ENCODE measurements at regions of chr5 and their contacts with region 1.

Region 1: GRCh38 chr5:88140856-88141752 is 127.5 kb downstream of the TMEM161B start:
- DNase-seq: peak; percentile 93 to 96 (median 94)
- ATAC-seq: peak; percentile 97 to 99 (median 99)
- H3K4me3 ChIP-seq: peak overlapping the region; percentile 31 to 65 (median 54)
- H3K27ac ChIP-seq: peak overlapping the region in 5 of 12 donors; percentile 6 to 62 (median 31)
- H3K4me1 ChIP-seq: peaks cover 0 to 47% (median 24%) of the 10 kb centered on the region in 12 donors
- H3K27me3 ChIP-seq: peaks cover 9 to 77% (median 47%) of the 10 kb centered on the region in 9 donors
- CTCF ChIP-seq: peak; percentile 44 to 90 (median 78)
- POLR2A ChIP-seq: peak in 1 of 2 donors; percentile 54

Region 2: DNA sequence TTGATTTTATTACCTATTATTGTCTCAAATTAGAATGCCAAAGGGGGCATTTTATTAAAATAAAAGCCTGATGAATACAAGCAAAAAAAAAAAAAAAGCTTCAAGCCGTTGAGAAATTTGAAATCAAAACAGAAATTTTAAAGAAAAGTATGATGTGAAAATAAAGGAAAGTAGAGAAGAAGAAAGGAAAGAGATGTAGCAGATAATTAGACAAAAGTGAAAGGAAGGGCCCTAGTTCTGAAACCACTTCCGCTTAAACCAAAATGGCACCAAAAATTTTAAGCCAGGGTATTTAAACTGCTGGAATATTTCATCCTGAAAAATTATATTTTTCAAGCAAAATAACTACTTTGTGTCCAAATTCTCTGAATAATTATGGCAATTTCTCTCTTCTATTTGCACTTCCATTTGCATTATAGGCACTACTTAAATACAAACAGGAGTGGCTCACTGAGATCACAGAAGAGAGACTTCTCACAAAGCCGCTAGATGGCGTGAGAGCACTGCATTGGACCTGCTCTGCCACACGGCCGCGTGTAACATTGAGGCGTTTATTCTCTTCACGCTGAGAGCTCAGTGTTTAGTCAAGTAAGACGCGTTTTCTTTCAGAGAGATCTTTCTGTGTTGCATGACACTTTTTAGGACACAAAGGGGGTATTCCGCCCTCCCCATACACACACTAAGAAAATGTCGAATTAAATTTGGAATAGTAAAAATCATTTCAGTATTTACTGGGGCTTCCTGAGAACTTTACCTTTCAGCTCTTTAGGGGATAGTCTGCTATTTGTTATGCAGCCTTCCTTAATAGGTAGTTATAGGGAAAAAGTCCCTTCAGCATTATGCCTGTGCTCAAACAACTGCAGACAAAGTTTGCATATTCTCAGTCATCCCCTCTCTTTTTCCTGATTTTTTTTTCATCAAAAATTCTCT is 360.0 kb before region 1 on chr5:
- intact Hi-C with region 1: loop called (anchors 5 to 10 kb)
- DNase-seq: peak; percentile 76 to 80 (median 76)
- ATAC-seq: peak; percentile 91 to 98 (median 96)
- H3K4me3 ChIP-seq: no peak overlapping the region
- H3K27ac ChIP-seq: no peak overlapping the region
- H3K4me1 ChIP-seq: no peaks in the 10 kb centered on the region
- H3K27me3 ChIP-seq: peaks cover 0 to 78% (median 36%) of the 10 kb centered on the region in 9 donors
- CTCF ChIP-seq: peak; percentile 83 to 97 (median 92)
- POLR2A ChIP-seq: no peak

Region 3: DNA sequence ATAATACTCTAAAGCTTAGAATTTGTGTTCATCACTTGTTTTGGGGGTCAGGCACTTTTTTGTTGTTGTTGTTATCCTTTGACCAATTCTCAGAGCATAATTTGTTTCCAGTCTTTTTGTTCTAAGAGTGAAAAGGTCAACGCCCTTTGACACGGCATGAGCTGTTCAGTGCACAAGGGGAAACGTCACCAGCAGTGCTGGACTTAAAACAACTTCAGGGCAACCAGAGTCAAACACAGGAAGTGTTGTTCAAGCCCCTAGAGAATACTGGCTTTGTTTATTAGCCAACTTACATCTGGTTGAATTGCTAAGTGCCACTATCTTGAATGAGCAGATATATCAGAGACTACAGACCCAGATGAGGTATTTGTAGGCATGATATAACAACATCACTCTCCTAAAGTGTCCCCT is 241.4 kb before region 1 on chr5:
- intact Hi-C with region 1: loop called in 1 of 10 experiments (anchors 5 kb)
- DNase-seq: peak in 4 of 5 donors; percentile 49 to 67 (median 60)
- ATAC-seq: peak; percentile 88 to 96 (median 94)
- H3K4me3 ChIP-seq: no peak overlapping the region
- H3K27ac ChIP-seq: peak overlapping the region in 10 of 12 donors; percentile 5 to 64 (median 44)
- H3K4me1 ChIP-seq: peaks cover 0 to 9% (median 3%) of the 10 kb centered on the region in 12 donors
- H3K27me3 ChIP-seq: no peaks in the 10 kb centered on the region
- CTCF ChIP-seq: no peak
- POLR2A ChIP-seq: no peak

Region 4: DNA sequence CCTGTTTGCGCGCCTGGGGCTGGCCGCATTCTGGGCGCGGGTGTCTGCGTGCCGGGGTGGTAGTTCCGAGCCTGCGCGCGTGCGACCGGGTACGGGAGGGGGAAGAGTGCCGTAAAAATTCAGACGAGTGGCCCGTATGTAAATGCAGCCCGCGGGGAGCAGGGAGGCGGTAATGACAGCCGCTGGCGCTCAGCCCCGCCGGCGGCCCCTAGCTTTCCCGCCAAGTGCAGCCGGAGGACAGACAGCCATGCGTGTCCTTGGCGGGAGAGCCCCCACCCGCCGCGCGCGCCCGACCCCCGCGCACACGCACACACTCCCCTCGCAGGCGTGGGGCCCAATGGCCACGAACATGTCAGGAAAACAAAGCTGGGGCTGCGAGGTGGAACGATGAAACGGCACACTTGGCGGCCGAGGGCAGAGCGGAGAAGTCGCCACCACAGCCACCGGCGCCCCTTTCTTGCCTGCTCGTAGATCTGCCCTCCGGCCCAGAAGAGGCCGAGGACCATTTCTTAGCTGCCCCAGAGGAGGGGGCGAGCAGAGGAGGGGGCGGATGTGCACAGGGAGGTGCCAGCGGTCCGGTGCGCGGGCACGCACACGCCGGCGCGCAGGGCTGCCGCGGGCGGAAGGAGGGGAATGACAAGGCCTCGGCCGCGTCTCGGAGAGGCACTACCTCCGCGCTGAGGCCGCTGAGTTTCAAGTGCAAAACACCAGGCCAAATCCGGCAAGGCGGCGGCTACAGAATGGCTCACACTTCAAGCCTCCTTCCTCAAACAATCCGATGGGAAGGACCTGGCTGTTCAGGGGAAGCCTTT is 533.5 kb after region 1 on chr5:
- intact Hi-C with region 1: loop called in 4 of 10 experiments (anchors 2 to 5 kb)
- DNase-seq: peak in 1 of 5 donors; percentile 55
- ATAC-seq: peak in 3 of 4 donors; percentile 11 to 57 (median 50)
- H3K4me3 ChIP-seq: peak overlapping the region; percentile 15 to 57 (median 42)
- H3K27ac ChIP-seq: peak overlapping the region in 1 of 12 donors; percentile 31
- H3K4me1 ChIP-seq: peaks cover 0 to 35% (median 20%) of the 10 kb centered on the region in 12 donors
- H3K27me3 ChIP-seq: peaks cover 73 to 100% (median 98%) of the 10 kb centered on the region in 9 donors
- CTCF ChIP-seq: no peak
- POLR2A ChIP-seq: no peak

Region 5: GRCh38 chr5:88690409-88691229 is 549.5 kb after region 1 on chr5:
- intact Hi-C with region 1: loop called in 2 of 10 experiments (anchors 5 kb)
- DNase-seq: peak; percentile 54 to 78 (median 63)
- ATAC-seq: peak; percentile 79 to 93 (median 88)
- H3K4me3 ChIP-seq: peak overlapping the region in 9 of 12 donors; percentile 8 to 38 (median 31)
- H3K27ac ChIP-seq: no peak overlapping the region
- H3K4me1 ChIP-seq: peaks cover 0 to 37% (median 18%) of the 10 kb centered on the region in 12 donors
- H3K27me3 ChIP-seq: peaks cover 70 to 100% (median 98%) of the 10 kb centered on the region in 9 donors
- CTCF ChIP-seq: peak; percentile 88 to 98 (median 96)
- POLR2A ChIP-seq: no peak